ENCODE measurements at regions of chr5 and their contacts with region 1.

Region 1: DNA sequence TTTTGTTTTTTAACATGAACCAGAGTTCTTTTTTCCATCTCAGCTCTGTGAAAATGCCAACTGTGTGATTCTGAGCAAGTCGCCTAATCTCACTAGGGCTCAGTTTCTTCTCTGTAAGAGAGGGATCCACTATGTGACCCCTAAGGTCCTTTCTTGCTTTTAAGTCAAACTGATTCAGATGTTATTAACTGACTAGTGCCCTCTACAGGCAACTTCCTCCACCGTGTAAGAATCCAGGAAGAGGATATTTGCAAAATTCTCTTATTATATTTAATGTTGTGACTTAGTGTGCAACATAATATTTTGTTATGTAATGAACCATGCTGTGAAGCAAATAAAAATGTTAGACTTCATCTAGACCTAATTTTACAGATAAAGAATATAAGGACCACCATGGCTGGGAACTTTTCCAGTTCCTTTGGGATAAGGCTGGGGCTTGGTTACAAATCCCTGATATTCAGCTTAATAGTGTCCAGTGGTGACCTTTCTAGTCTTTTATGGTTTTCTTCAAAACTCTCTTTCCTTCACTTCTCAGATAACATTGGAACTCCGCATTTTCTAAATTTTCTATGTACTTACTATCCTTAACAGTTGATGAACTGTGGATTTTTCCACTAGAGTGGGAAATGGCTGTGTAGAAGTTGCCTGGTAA is 244.7 kb downstream of the PIK3R1 start:
- DNase-seq: peak; percentile 74
- H3K4me3 ChIP-seq: no peak overlapping the region
- H3K27ac ChIP-seq: no peak overlapping the region
- H3K4me1 ChIP-seq: peaks cover 11% of the 10 kb centered on the region
- H3K27me3 ChIP-seq: no peaks in the 10 kb centered on the region
- CTCF ChIP-seq: peak; percentile 87

Region 2: GRCh38 chr5:68745448-68745847 is 285.2 kb after region 1 on chr5:
- CTCF ChIA-PET with region 1: no interaction called
- POLR2A ChIA-PET with region 1: no interaction called
- intact Hi-C with region 1: loop called (anchors 10 kb)
- DNase-seq: peak; percentile 50
- H3K4me3 ChIP-seq: no peak overlapping the region
- H3K27ac ChIP-seq: no peak overlapping the region
- H3K4me1 ChIP-seq: no peaks in the 10 kb centered on the region
- H3K27me3 ChIP-seq: no peaks in the 10 kb centered on the region
- CTCF ChIP-seq: peak; percentile 67